ENCODE measurements at regions of chr3 and their contacts with region 1.

Region 1: DNA sequence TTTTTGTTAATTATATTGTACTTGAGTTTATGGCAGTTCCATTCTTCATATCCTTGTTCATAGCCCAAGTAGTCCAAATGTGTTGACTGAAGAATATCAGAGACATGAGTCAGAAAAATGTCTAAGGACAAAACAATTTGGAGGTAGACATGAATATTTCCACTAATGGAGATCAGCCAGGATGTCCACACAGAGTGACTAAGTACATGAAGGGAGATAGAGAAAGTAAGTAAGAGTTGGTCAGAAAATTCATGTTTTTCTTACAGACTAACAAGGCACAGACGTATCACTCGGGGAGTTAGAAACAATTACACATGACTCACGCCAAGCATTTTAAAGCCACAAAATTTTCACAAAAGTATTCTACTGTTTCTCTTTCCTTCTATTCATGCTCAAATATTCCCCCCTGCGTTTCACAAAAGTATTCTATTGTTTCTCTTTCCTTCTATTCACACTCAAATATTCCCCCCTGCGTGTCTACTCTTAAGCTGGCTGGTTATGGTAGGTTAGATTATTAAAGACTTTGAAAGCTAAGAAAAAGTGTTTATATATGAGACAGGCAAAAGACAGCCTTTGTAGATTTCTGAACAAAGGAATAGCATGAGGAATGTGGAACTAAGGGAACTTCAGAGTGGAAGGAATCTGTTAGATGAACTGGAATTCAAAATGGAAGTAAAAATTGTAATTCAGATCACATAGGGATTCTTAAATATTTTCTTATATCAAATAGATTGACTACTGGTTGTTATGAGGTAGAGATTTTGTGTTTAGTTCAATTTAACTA is 648.7 kb upstream of the CCDC54 start:
- DNase-seq: peak; percentile 96
- H3K4me3 ChIP-seq: peak overlapping the region in 1 of 3 experiments; percentile 41
- H3K27ac ChIP-seq: peak overlapping the region; percentile 96
- H3K4me1 ChIP-seq: peaks cover 45% of the 10 kb centered on the region
- H3K27me3 ChIP-seq: no peaks in the 10 kb centered on the region
- CTCF ChIP-seq: no peak
- POLR2A ChIP-seq: no peak

Region 2: DNA sequence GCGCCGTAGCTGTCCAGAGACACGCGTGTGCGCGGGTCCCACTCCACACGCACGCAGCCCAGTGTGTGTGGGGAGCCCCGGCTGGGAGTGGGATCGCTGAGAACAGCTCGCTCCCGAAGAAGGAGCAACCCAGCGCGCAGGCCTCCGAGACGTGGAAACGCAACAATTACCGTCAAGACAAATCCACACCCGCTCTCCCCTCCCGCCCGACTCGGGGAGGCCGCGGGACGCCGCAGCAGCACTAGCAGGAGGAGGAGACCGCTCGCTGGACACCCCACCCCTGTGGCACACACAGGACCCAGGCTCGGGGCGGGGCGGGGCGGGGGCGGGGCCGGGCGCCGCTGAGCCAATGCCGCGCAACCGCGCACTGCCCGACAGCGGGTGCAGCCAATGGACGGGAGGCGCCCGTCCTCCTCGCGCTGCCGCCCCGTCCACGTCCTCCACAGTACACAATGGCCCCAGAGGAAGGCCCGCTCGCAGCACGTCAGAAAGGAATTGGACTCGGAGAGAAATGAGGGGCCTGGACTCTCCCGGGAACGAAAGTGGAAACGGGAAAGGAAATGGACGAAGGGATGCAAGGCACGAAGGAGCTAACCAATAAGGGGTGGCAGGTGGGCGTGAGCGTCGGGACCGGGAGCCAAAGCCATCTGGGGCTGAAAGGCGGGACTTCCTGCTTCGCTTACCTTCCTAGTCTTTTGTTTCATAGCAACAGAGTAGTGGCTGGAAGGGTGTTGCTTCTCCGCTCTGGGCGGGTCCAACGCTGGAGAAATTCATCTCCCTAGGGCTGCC is 859.6 kb before region 1 on chr3 and contains the start of gene CBLB:
- CTCF ChIA-PET with region 1: no interaction called
- POLR2A ChIA-PET with region 1: no interaction called
- dilution Hi-C with region 1: no loop called
- intact Hi-C with region 1: loop called (anchors 2 kb)
- DNase-seq: peak; percentile 96
- H3K4me3 ChIP-seq: peak within 1 kb of the TSS; percentile 84 to 97 (median 94)
- H3K27ac ChIP-seq: peak within 1 kb of the TSS; percentile 64
- H3K4me1 ChIP-seq: peaks cover 34% of the 10 kb centered on the region
- H3K27me3 ChIP-seq: no peaks in the 10 kb centered on the region
- CTCF ChIP-seq: no peak
- POLR2A ChIP-seq: no peak
- total RNA-seq, gene CBLB: 39.6 and 39.8 TPM in 2 replicates

Region 3: DNA sequence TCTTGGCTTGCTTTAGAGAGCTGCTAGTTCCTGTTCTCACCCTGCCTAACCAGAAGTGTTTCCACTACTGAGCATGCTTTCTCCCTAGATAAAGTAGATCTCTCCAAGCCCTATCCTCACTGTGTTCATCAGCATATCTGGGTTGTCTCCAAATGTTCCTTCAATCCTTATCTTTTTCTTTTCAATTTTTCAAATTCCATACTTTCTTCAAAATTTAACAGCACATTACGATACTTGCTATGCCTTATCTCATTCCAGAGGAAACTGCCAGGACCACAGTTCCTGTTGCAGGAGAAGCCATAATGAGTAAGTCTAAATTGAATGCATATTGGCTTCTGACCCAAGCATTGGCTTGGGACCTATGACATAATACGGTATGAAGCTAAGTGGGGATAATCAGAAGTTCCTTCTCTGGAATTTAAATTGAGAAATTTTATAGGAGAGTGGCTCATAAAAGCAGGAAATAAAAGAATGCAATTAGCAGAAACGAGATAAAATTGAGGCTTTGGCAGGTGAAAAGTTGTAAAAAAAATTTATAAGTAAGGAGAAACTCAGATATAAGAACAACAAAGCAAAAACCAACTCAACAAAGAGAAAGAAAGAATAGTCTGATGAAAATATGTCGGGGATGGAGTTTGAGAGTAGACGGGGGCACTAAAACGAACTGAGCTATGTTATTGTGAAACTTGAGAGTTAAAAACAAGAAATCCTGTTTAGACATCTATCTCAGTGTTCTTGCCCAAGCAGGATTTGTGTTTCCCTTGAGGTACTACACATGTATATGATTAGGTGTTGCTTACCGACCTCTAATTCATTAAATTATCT is 17.0 kb after region 1 on chr3:
- CTCF ChIA-PET with region 1: interaction called, 13 read pairs
- POLR2A ChIA-PET with region 1: interaction called, 14 read pairs
- dilution Hi-C with region 1: no loop called
- intact Hi-C with region 1: loop called (anchors 1 kb)
- DNase-seq: peak; percentile 96
- H3K4me3 ChIP-seq: peak overlapping the region in 1 of 3 experiments; percentile 52
- H3K27ac ChIP-seq: peak overlapping the region; percentile 92
- H3K4me1 ChIP-seq: peaks cover 36% of the 10 kb centered on the region
- H3K27me3 ChIP-seq: no peaks in the 10 kb centered on the region
- CTCF ChIP-seq: no peak
- POLR2A ChIP-seq: no peak

Region 4: GRCh38 chr3:106811376-106811775 is 82.9 kb after region 1 on chr3:
- CTCF ChIA-PET with region 1: no interaction called
- POLR2A ChIA-PET with region 1: no interaction called
- dilution Hi-C with region 1: no loop called
- intact Hi-C with region 1: loop called (anchors 2 kb)
- DNase-seq: peak; percentile 65
- H3K4me3 ChIP-seq: no peak overlapping the region
- H3K27ac ChIP-seq: no peak overlapping the region
- H3K4me1 ChIP-seq: peaks cover 12% of the 10 kb centered on the region
- H3K27me3 ChIP-seq: no peaks in the 10 kb centered on the region
- CTCF ChIP-seq: no peak
- POLR2A ChIP-seq: no peak

Measured in endothelial cell of umbilical vein (primary cell).